ENCODE measurements at regions of chr10 and their contacts with region 1.

Region 1: DNA sequence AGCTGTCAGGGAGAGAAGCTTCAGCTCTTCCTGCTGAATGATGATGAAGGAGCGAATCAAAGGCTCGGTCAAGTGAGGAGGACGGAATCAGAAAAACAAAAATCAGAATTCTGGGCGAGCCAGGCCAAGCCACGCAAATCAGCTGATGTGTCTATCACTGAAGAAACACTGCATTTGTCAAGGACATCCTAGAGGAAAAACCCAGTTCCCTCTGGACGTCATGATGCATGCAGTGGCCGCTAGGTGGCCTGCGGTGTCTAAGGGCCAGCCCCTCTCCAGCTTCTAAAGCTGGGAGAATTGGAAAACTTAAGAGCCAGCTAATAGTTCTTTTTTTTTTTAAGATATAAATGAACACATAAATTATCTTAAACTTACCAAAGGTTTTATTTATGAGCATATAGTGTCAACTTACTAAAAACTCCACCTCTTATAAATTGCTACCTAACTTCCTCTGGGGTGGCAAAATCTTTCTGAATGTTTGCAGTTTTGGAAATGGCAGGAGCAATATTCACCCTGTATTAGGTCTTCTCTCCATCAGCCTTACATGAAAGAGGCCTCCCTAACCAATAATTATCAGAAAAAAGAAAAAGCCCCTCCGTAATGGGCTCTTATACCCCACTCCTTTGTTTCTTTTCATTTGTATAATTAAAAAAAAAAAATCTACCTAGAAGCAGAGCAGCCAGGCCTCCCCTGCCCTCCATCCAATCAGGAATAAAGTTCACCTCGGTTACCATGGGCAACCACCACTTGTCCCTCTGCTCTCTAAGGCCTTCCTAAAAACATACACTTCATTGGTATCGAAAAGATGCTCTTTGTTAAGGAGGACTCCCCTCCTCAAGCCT is 186.8 kb downstream of the USP6NL start:
- DNase-seq: peak in 1 of 2 experiments; percentile 73
- H3K4me3 ChIP-seq: no peak overlapping the region
- H3K27ac ChIP-seq: no peak overlapping the region
- H3K4me1 ChIP-seq: no peaks in the 10 kb centered on the region
- H3K27me3 ChIP-seq: no peaks in the 10 kb centered on the region
- CTCF ChIP-seq: peak; percentile 86 to 92 (median 91)
- EP300 ChIP-seq: no peak
- POLR2A ChIP-seq: no peak
- RAD21 ChIP-seq: peak; percentile 64 to 81

Region 2: DNA sequence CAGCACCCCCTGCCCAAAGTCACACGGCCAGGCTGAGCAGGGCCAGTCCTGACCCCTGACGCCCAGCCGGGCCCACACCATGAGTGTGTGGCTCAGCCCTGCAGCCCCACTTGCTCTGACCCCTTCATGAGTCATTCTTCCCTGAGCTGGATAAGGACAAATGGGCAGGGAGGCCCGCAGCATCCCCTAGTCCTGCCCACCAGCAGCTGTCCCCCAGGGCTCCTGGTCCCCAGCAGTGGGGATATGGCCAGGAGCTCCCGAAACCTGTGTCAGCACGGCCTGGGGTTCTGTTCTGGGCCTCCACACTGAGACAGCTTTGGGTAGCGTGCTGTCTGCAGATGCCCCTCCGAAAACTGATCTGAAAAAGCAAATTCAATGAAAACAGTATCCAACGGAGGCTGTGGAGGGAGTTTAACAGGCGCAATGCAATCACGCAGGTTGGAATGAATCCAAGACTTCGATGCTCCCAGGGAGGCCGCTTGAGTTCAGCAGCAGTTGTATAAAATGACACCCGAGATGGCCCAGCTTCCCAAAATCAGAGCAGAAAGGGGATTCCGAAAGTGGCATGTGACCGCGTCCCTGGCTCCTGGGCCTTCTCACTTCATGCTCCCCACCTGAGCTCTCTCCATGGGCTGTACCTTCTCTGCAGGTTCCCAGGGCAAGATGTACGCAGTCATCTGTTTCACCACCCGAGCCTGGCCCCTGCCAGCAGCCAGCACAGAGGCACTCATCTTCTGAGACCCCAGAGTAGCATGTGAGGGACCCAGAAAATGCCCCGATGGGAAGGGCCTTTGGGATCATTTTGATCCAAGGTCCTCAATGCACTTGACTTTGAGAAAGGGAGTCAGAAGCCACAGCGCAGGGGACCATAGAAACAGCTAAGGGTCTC is 27.4 kb before region 1 on chr10:
- CTCF ChIA-PET with region 1: interaction called, 10 read pairs
- POLR2A ChIA-PET with region 1: no interaction called
- DNase-seq: no peak
- H3K4me3 ChIP-seq: no peak overlapping the region
- H3K27ac ChIP-seq: no peak overlapping the region
- H3K4me1 ChIP-seq: peaks cover 0 to 3% (median 1%) of the 10 kb centered on the region in 4 experiments; a peak in 3 of 7 replicates
- H3K27me3 ChIP-seq: no peaks in the 10 kb centered on the region
- CTCF ChIP-seq: no peak
- EP300 ChIP-seq: no peak
- POLR2A ChIP-seq: no peak
- RAD21 ChIP-seq: no peak

Region 3: DNA sequence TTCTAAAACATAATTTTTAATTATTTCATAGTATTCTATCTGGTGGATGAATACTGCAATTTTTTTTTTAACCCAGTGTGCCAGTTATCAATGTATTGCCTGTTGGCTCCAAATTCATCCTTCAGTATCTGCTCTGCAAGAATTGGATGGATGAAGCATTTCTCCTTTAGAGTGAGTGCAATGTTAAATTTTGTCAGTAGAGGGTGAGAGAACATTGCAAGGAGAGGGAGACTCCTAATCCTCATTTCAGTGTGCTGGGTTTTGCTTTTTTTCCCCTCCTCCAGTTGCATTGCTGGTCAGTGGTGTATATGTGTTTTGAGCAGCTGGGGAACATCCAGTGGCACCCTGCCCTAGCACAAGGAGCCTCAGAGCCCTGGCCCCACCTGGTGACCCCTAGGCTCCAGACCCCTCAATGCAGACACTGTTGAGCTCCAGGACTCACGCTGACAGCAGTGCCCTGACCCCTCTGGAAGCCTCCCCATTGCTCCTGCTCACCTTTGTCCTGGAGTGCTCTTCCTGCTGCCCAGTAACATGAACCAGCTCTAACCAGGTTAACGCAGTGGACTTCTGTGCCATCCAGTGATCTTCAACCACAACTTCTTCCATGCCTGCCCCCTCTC is 12.6 kb before region 1 on chr10:
- CTCF ChIA-PET with region 1: interaction called, 36 read pairs
- POLR2A ChIA-PET with region 1: no interaction called
- DNase-seq: no peak
- H3K4me3 ChIP-seq: no peak overlapping the region
- H3K27ac ChIP-seq: no peak overlapping the region
- H3K4me1 ChIP-seq: peaks cover 0 to 3% (median 0%) of the 10 kb centered on the region in 4 experiments; a peak in 2 of 7 replicates
- H3K27me3 ChIP-seq: no peaks in the 10 kb centered on the region
- CTCF ChIP-seq: peak in 2 of 3 experiments; percentile 33 to 56; a peak in 2 of 4 replicates
- EP300 ChIP-seq: no peak
- POLR2A ChIP-seq: no peak
- RAD21 ChIP-seq: peak; percentile 75 to 76

Region 4: GRCh38 chr10:11468126-11468742 is 43.6 kb after region 1 on chr10:
- CTCF ChIA-PET with region 1: interaction called, 20 read pairs
- POLR2A ChIA-PET with region 1: no interaction called
- DNase-seq: no peak
- H3K4me3 ChIP-seq: no peak overlapping the region
- H3K27ac ChIP-seq: no peak overlapping the region
- H3K4me1 ChIP-seq: peaks cover 4 to 22% (median 15%) of the 10 kb centered on the region in 4 experiments; a peak in 6 of 7 replicates
- H3K27me3 ChIP-seq: no peaks in the 10 kb centered on the region
- CTCF ChIP-seq: no peak
- EP300 ChIP-seq: no peak
- POLR2A ChIP-seq: no peak
- RAD21 ChIP-seq: no peak

Region 5: GRCh38 chr10:11488126-11488525 is 63.4 kb after region 1 on chr10:
- CTCF ChIA-PET with region 1: no interaction called
- POLR2A ChIA-PET with region 1: no interaction called
- DNase-seq: no peak
- H3K4me3 ChIP-seq: no peak overlapping the region
- H3K27ac ChIP-seq: no peak overlapping the region
- H3K4me1 ChIP-seq: no peaks in the 10 kb centered on the region; a peak in 1 of 7 replicates
- H3K27me3 ChIP-seq: no peaks in the 10 kb centered on the region
- CTCF ChIP-seq: no peak
- EP300 ChIP-seq: no peak
- POLR2A ChIP-seq: no peak
- RAD21 ChIP-seq: no peak

Region 6: GRCh38 chr10:11499425-11500071 is 74.9 kb after region 1 on chr10:
- CTCF ChIA-PET with region 1: interaction called, 12 read pairs
- POLR2A ChIA-PET with region 1: no interaction called
- DNase-seq: no peak
- H3K4me3 ChIP-seq: no peak overlapping the region
- H3K27ac ChIP-seq: no peak overlapping the region
- H3K4me1 ChIP-seq: peaks cover 0 to 3% (median 0%) of the 10 kb centered on the region in 4 experiments; a peak in 1 of 7 replicates
- H3K27me3 ChIP-seq: no peaks in the 10 kb centered on the region
- CTCF ChIP-seq: no peak
- EP300 ChIP-seq: no peak
- POLR2A ChIP-seq: no peak
- RAD21 ChIP-seq: no peak

Measured in H1 (cell line).